Transverse colon (tissue), 4 donors: ENCODE measurements at regions of chr21 and their contacts with region 1.

Region 1: GRCh38 chr21:42850866-42851391 is 28.4 kb downstream of the WDR4 start:
- DNase-seq: no peak
- H3K4me3 ChIP-seq: no peak overlapping the region
- H3K27ac ChIP-seq: no peak overlapping the region
- H3K4me1 ChIP-seq: no peaks in the 10 kb centered on the region
- H3K27me3 ChIP-seq: no peaks in the 10 kb centered on the region
- CTCF ChIP-seq: peak in 4 of 5 experiments; percentile 13 to 32 (median 28)
- EP300 ChIP-seq: no peak
- POLR2A ChIP-seq: no peak

Region 2: DNA sequence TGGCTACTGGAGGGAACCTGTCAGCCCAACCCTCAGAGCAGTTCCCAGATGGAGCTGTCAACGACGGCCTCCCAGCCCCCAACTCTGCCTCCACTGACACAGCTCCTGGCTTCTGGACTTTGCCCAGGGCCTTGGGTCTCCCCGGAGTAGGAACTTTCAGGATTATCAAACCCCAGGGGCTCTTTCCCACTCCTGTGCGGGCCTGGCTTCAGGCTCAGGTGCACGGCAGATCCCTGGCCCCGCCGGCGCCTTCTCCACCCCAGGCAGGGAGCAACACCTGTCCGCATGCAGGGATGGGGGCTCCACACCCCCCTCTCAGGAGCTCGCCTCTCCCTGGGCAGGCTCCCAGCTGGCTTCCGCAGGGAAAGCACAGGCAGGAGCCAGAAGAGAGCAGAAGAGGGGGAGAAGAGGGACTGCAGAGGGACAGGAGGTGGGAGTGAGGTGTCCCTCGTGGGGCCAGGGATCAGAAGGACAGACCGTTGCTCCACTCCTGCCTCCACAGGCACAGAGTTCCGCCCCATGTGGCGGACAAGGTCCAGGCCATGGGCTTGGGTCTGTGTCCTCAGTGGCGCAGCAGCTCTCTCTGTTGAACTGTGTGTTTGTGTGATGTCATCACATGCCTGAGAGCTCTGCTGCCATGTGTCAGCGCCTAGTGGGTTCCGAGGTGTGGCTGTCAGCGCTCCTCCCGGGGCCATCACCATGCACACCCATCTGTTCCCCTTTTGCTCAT is 89.8 kb before region 1 on chr21:
- in situ Hi-C with region 1: loop called in 1 of 4 experiments (anchors 25 kb)
- intact Hi-C with region 1: no loop called
- DNase-seq: no peak
- H3K4me3 ChIP-seq: no peak overlapping the region
- H3K27ac ChIP-seq: no peak overlapping the region
- H3K4me1 ChIP-seq: no peaks in the 10 kb centered on the region
- H3K27me3 ChIP-seq: no peaks in the 10 kb centered on the region
- CTCF ChIP-seq: no peak
- EP300 ChIP-seq: no peak
- POLR2A ChIP-seq: no peak